ENCODE measurements at regions of chr13 and their contacts with region 1.

Region 1: DNA sequence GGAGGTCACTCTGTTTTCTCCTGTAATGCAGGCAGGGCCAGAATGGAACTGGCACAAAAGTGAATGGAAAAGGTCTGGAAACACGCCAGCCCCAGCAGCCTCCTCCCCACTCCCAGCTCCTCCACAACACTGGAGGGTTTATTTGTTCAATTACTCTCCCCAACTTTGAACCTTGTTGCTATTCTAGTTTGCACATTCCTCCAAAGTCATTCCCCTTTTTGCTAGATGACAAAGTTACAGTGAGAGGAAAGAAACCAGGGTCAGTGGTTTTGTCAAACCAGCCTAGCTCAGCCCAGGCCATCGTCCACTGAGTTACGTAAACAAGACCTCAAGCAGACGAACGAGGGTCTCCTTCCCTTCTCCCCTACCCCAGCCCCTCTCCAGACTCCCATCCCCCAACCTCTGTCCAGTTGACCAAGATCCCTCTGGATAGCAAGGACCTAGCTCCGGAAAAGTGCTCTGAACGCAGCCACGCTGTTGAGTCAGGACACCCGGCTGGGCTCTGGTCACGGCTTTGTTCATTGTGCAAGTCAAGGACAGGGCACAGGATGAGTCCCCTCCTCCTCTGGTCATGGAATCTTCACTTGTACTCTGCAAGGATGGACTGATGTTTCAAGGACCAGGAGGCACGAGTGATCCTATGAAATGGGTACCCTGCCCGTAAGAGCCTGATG is 180.0 kb downstream of the USP12 start:
- DNase-seq: peak; percentile 97
- ATAC-seq: peak; percentile 76
- H3K4me3 ChIP-seq: peak overlapping the region; percentile 23 to 61 (median 34); a peak in 5 of 6 replicates
- H3K27ac ChIP-seq: peak overlapping the region; percentile 95
- H3K4me1 ChIP-seq: peaks cover 85% of the 10 kb centered on the region
- H3K27me3 ChIP-seq: no peaks in the 10 kb centered on the region
- CTCF ChIP-seq: no peak
- EP300 ChIP-seq: peak in 1 of 2 experiments; percentile 83; a peak in 2 of 4 replicates
- POLR2A ChIP-seq: peak in 1 of 2 experiments; percentile 79; a peak in 3 of 4 replicates
- RAD21 ChIP-seq: 0 out of 2 replicates have a peak, but pooled peaks have one; percentile 7

Region 2: DNA sequence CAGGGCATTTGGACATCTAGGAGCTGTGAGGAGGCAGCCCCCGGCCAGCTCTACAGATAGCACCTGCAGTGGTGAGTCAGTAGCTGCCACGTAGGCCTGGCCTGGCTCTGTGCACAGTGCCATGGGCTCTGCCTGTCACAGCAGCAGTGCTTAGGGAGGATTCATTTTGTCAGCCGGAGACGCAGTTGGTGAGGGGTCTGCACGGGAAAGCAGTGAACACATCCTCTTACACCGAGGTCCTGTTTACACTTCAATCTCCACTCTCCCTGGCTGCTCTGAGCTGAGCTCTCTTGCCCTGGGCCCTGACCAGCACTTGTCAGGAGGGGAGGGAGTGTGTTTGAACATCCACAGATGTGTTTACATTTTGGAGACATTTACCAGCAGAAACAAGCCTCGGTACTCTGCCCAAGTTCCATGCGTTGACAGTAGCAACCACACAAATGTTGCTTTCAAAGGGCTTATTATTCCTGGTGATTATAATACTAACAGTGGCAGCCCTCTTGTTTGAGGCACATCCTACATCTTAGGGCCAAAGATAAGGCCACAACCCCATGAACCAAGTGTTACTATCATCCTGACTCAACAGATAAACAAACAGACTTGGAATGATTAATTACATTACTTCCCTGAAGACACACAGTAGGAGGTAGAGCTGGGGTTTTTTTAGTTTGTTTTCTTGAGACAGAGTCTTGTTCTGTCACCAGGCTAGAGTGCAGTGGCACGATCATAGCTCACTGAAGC is 31.1 kb after region 1 on chr13:
- CTCF ChIA-PET with region 1: no interaction called
- POLR2A ChIA-PET with region 1: interaction called, 8 read pairs
- in situ Hi-C with region 1: no loop called
- intact Hi-C with region 1: loop called (anchors 1 kb)
- DNase-seq: peak; percentile 90
- ATAC-seq: peak; percentile 92
- H3K4me3 ChIP-seq: peak overlapping the region; percentile 6 to 57 (median 19); a peak in 4 of 6 replicates
- H3K27ac ChIP-seq: peak overlapping the region; percentile 64
- H3K4me1 ChIP-seq: peaks cover 73% of the 10 kb centered on the region
- H3K27me3 ChIP-seq: peaks cover 0 to 7% of the 10 kb centered on the region in 2 experiments; a peak in 2 of 5 replicates
- CTCF ChIP-seq: no peak
- EP300 ChIP-seq: peak in 1 of 2 experiments; percentile 47; a peak in 1 of 4 replicates
- POLR2A ChIP-seq: peak in 1 of 2 experiments; percentile 44; a peak in 1 of 4 replicates
- RAD21 ChIP-seq: no peak

Region 3: DNA sequence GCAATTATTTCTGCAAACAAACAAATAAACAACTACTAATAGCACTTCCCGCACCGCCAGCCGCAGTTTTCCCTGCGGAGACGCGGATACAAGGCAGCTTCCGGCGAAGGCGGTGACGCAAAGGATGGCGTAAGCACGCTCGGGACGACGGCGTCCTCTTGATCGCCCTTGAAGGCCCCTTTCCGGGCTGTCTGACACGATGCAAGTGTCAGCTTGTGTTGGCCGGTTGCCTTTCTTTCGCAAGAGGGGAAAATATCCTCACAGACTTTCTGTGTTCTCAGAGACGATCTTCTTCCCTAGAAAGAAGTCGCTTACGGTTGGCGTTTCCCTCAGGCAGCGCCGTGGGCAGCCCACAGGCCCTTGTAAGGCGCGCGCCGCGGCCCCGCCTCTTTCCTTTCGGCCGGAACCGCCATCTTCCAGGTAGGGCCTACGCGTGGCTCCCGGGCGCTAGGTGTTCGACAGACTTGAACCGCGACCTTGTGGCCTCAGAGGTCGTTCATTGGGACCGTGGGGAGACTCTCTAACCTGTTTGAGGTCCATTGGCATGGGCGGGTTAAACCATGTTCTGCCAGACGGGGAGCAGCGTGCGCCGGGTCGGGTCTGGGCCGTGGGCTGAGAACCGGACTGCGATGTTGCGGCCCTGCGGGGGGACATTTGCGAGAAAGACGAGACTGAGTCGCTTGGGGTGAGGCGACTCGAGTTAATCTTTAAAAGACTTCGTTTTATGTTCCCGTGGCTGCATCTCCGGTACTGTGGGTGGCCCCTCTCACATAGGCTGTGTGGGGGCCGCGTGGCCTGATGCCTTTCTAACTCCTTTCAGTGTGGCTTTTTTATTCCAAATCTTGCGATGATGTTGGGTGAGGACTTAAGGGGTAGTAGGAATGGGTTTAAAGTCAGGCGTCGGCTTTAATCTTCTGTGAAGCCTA is 259.8 kb after region 1 on chr13 and contains the start of gene RPL21:
- CTCF ChIA-PET with region 1: no interaction called
- POLR2A ChIA-PET with region 1: interaction called, 4 read pairs
- in situ Hi-C with region 1: no loop called
- intact Hi-C with region 1: loop called (anchors 1 kb)
- DNase-seq: peak; percentile 91
- ATAC-seq: peak; percentile 96
- H3K4me3 ChIP-seq: peak within 1 kb of the TSS; percentile 84 to 89 (median 85)
- H3K27ac ChIP-seq: peak within 1 kb of the TSS; percentile 92
- H3K4me1 ChIP-seq: peaks cover 38% of the 10 kb centered on the region
- H3K27me3 ChIP-seq: no peaks in the 10 kb centered on the region; a peak in 1 of 5 replicates
- CTCF ChIP-seq: no peak; the same call in 1 of the 2 replicates
- EP300 ChIP-seq: peak in 1 of 2 experiments; percentile 4; a peak in 1 of 4 replicates
- POLR2A ChIP-seq: peak; percentile 86 to 88
- RAD21 ChIP-seq: 0 out of 2 replicates have a peak, but pooled peaks have one; percentile 35
- total RNA-seq, gene RPL21: 1,234 and 1,660 TPM in 2 replicates